ENCODE measurements at regions of chr4 and their contacts with region 1.

Region 1: DNA sequence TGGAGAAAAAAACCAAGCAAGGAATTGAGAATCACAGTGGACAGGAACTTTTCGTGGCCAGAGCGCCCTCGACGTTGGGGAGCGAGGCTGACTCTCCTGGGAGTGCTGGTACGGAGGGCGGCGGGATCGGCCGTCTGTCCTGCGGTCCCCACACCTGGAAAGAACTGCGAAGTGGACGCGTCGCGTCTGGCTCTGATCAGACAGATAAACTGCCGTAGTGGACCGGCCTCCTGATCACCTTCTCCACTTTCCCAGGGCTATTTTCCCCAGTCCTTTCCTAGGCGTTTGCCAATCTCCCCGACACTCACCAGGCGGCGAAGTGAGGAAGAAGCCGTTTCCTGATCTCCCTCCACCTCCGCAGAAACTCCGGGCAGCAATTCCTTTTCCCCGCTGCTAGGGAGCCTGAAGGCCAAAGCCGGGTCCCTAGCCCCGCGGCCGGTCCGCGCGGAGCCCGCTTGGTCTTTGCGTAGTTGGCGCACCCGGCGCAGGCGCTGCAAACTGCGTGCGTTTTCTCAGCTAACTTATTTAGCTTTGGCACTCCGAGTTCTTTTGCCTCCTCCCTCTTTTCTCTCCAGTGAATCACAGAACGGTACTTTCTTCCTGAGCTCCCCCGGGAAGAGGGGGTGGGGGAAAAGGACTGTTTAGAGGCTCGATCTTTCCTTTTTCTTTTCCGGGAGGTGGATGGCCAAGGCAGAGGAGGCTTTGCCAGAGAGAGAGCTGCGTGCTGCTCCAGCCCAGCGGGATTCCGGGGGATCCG is at the start of gene ARSJ:
- H3K4me3 ChIP-seq: peak within 1 kb of the TSS; percentile 64
- H3K27ac ChIP-seq: peak within 1 kb of the TSS; percentile 69; the same call in 1 of the 2 replicates
- H3K4me1 ChIP-seq: 0 out of 2 replicates have a peak, but pooled peaks cover 3% of the 10 kb centered on the region
- CTCF ChIP-seq: no peak

Region 2: GRCh38 chr4:113901994-113902787 is 77.1 kb before region 1 on chr4:
- CTCF ChIA-PET with region 1: no interaction called
- POLR2A ChIA-PET with region 1: no interaction called
- H3K4me3 ChIP-seq: no peak overlapping the region
- H3K27ac ChIP-seq: no peak overlapping the region
- H3K4me1 ChIP-seq: no peaks in the 10 kb centered on the region
- CTCF ChIP-seq: no peak

Region 3: GRCh38 chr4:113958766-113959538 is 20.4 kb before region 1 on chr4:
- CTCF ChIA-PET with region 1: interaction called, 8 read pairs
- POLR2A ChIA-PET with region 1: interaction called, 12 read pairs
- H3K4me3 ChIP-seq: peak overlapping the region; percentile 6
- H3K27ac ChIP-seq: no peak overlapping the region
- H3K4me1 ChIP-seq: peaks cover 6% of the 10 kb centered on the region
- CTCF ChIP-seq: no peak

Region 4: GRCh38 chr4:114173968-114174367 is 194.6 kb after region 1 on chr4:
- CTCF ChIA-PET with region 1: no interaction called
- POLR2A ChIA-PET with region 1: no interaction called
- H3K4me3 ChIP-seq: no peak overlapping the region
- H3K27ac ChIP-seq: no peak overlapping the region
- H3K4me1 ChIP-seq: no peaks in the 10 kb centered on the region
- CTCF ChIP-seq: no peak

Region 5: GRCh38 chr4:114217150-114217817 is 238.0 kb after region 1 on chr4:
- CTCF ChIA-PET with region 1: no interaction called
- POLR2A ChIA-PET with region 1: no interaction called
- H3K4me3 ChIP-seq: no peak overlapping the region
- H3K27ac ChIP-seq: no peak overlapping the region
- H3K4me1 ChIP-seq: no peaks in the 10 kb centered on the region
- CTCF ChIP-seq: no peak

Region 6: GRCh38 chr4:114494246-114494803 is 515.0 kb after region 1 on chr4:
- CTCF ChIA-PET with region 1: no interaction called
- POLR2A ChIA-PET with region 1: no interaction called
- H3K4me3 ChIP-seq: no peak overlapping the region
- H3K27ac ChIP-seq: no peak overlapping the region
- H3K4me1 ChIP-seq: no peaks in the 10 kb centered on the region
- CTCF ChIP-seq: no peak

Measured in HEK293 (cell line).